ENCODE measurements at regions of chr15 and their contacts with region 1.

Region 1: GRCh38 chr15:75453703-75454470 is 2.4 kb upstream of the SIN3A start:
- DNase-seq: peak; percentile 84 to 99 (median 97)
- ATAC-seq: peak; percentile 41 to 48 (median 45)
- H3K4me3 ChIP-seq: peak overlapping the region; percentile 78 to 93
- H3K4me3 Mint-ChIP-seq: peak overlapping the region; percentile 94 to 100 (median 95)
- H3K27ac ChIP-seq: peak overlapping the region; percentile 88
- H3K27ac Mint-ChIP-seq: peak overlapping the region; percentile 98 to 99
- H3K4me1 ChIP-seq: peaks cover 22 to 41% of the 10 kb centered on the region in 2 experiments
- H3K4me1 Mint-ChIP-seq: peaks cover 38 to 46% (median 40%) of the 10 kb centered on the region in 3 donors
- H3K27me3 ChIP-seq: no peaks in the 10 kb centered on the region
- H3K27me3 Mint-ChIP-seq: no peaks in the 10 kb centered on the region

Region 2: DNA sequence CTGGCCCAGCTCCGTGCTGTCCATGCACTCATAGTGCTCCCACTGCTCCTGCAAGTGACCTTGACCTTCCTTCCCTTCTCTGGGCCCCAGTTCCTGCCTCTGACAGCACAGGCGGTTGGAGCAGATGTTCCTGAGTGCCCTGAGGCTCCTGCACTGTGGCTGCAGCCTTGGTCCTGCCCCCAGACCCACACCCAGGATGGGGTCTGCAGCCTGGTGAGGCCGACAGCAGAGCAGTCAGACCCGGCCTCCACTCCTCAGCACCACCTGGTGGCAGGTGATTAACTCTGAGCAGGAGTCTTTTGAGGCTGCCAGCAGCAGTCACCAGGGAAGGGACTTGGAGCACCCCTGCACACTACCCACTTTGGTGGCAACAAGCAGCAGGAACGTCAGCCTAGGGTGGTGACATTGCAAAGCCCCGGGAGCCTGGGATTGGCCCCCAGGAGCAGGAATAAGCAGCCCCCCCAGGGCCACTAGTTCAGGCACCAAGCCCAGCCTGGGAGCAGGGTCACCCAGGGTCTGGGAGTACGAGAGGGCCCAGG is 1151.0 kb before region 1 on chr15:
- CTCF ChIA-PET with region 1: no interaction called
- POLR2A ChIA-PET with region 1: no interaction called
- DNase-seq: peak in 14 of 35 experiments; percentile 11 to 45 (median 28)
- ATAC-seq: no peak
- H3K4me3 ChIP-seq: no peak overlapping the region
- H3K4me3 Mint-ChIP-seq: no peak overlapping the region
- H3K27ac ChIP-seq: no peak overlapping the region
- H3K27ac Mint-ChIP-seq: no peak overlapping the region
- H3K4me1 ChIP-seq: no peaks in the 10 kb centered on the region
- H3K4me1 Mint-ChIP-seq: no peaks in the 10 kb centered on the region
- H3K27me3 ChIP-seq: peaks cover 3 to 73% of the 10 kb centered on the region in 2 experiments
- H3K27me3 Mint-ChIP-seq: peaks cover 49 to 67% of the 10 kb centered on the region in 2 donors

Region 3: GRCh38 chr15:74408815-74409214 is 1045.1 kb before region 1 on chr15:
- CTCF ChIA-PET with region 1: no interaction called
- POLR2A ChIA-PET with region 1: no interaction called
- DNase-seq: no peak
- ATAC-seq: no peak
- H3K4me3 ChIP-seq: no peak overlapping the region
- H3K4me3 Mint-ChIP-seq: no peak overlapping the region
- H3K27ac ChIP-seq: no peak overlapping the region
- H3K27ac Mint-ChIP-seq: no peak overlapping the region
- H3K4me1 ChIP-seq: peaks cover 0 to 4% of the 10 kb centered on the region in 2 experiments
- H3K4me1 Mint-ChIP-seq: peaks cover 4 to 13% (median 5%) of the 10 kb centered on the region in 3 donors
- H3K27me3 ChIP-seq: peaks cover 0 to 3% of the 10 kb centered on the region in 2 experiments
- H3K27me3 Mint-ChIP-seq: no peaks in the 10 kb centered on the region

Region 4: DNA sequence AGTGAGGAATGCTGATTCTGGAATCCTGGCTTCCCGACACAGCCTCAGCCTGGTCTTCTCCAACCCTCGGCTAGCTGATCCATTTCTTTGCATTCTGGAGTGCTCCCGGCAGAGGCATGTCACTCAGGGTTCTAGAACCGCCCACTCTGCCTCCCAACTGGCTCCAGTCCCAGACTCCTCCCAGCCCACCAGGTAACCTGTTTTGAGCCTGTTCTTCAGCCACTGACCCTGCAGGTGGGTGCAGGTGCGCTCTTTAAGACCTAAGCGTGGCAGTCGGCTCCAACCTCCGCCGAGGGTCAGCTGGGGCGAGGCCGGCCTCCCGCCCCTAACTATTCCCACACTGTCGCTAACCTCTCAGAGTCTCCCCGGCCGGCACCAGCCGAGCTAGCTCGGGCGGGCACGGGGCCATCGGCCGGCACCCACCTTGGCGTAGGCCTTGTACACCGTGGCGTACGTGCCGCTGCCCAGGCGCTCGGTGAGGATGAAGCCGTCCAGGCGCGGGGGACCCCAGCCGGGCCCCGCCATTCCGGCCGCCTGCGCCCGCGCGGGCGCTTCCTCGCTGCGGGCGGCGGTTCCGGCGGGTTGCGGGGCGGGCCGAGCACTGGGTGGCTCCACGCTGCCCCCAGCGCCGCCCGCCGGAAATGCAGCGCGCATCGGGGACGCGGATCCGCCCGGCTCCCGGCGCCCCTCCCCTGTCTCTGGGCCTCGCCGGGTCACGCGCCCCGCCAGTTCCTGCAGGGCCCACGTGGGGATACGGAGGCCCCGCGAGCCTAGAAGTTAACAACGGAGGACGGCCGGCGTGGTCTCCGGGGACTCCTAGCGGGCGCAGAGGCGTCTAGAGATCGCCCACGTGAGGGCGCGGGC is 611.1 kb before region 1 on chr15 and contains the start of gene ULK3:
- CTCF ChIA-PET with region 1: no interaction called
- POLR2A ChIA-PET with region 1: interaction called in 1 of 2 experiments, 13 read pairs
- DNase-seq: peak; percentile 82 to 95 (median 90)
- ATAC-seq: peak; percentile 84 to 90 (median 88)
- H3K4me3 ChIP-seq: peak within 1 kb of the TSS; percentile 84 to 96
- H3K4me3 Mint-ChIP-seq: peak within 1 kb of the TSS; percentile 86 to 90 (median 86)
- H3K27ac ChIP-seq: peak within 1 kb of the TSS; percentile 71
- H3K27ac Mint-ChIP-seq: peak within 1 kb of the TSS; percentile 96 to 97
- H3K4me1 ChIP-seq: peaks cover 28 to 66% of the 10 kb centered on the region in 2 experiments
- H3K4me1 Mint-ChIP-seq: peaks cover 48 to 64% (median 54%) of the 10 kb centered on the region in 3 donors
- H3K27me3 ChIP-seq: no peaks in the 10 kb centered on the region
- H3K27me3 Mint-ChIP-seq: no peaks in the 10 kb centered on the region
- total RNA-seq, gene ULK3: 53.4 to 112 (median 101) TPM

Region 5: GRCh38 chr15:75354454-75354853 is 99.4 kb before region 1 on chr15:
- CTCF ChIA-PET with region 1: no interaction called
- POLR2A ChIA-PET with region 1: no interaction called
- DNase-seq: no peak
- ATAC-seq: no peak
- H3K4me3 ChIP-seq: no peak overlapping the region
- H3K4me3 Mint-ChIP-seq: no peak overlapping the region
- H3K27ac ChIP-seq: no peak overlapping the region
- H3K27ac Mint-ChIP-seq: no peak overlapping the region
- H3K4me1 ChIP-seq: peaks cover 0 to 16% of the 10 kb centered on the region in 2 experiments
- H3K4me1 Mint-ChIP-seq: peaks cover 14 to 17% (median 15%) of the 10 kb centered on the region in 3 donors
- H3K27me3 ChIP-seq: no peaks in the 10 kb centered on the region
- H3K27me3 Mint-ChIP-seq: no peaks in the 10 kb centered on the region

Region 6: DNA sequence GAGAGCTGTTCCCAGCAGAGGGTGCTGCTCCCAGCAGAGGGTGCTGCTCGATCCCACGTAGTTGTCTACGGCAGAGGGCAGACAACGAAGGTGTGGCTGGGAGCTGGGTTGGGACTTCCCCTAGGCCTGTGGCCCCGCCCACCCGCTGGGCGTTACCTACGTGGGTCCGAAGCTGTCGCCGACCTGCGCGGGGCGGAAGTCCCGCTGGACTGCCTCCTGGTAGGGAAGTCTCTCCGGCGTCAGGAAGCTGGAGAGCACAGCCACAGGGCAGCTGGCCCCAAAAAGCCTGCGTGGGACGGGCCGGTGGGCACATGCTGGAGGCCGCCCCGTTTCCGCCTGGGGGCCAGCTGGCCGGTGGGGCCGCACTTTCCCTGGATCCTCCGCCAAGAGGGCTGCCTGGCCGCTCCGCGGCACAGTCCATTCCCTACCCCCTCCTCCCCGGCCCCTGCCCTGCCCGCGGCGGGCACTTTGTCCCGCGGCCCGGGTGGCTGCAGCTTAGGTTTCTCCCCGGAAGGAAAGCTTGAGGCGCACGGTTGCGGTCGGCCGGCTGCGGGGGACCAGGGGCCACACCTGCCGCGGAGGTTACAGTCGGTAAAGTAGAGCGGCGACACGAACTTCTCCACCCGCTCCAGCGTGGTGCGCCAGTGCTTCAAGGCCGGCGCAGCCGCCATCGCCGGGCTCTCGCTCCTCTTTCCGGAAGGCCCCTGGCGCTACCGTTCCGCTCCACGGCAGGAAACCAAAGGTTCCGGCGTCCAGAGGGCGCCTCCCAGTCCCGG is 85.8 kb before region 1 on chr15 and contains the start of gene MAN2C1:
- CTCF ChIA-PET with region 1: interaction called, 4 to 17 read pairs
- POLR2A ChIA-PET with region 1: interaction called, 4 to 8 read pairs
- DNase-seq: peak; percentile 73 to 96 (median 84)
- ATAC-seq: peak; percentile 92 to 94 (median 92)
- H3K4me3 ChIP-seq: peak within 1 kb of the TSS; percentile 91 to 93
- H3K4me3 Mint-ChIP-seq: peak within 1 kb of the TSS; percentile 89 to 91 (median 90)
- H3K27ac ChIP-seq: peak within 1 kb of the TSS; percentile 92
- H3K27ac Mint-ChIP-seq: peak within 1 kb of the TSS; percentile 95
- H3K4me1 ChIP-seq: peaks cover 3 to 18% of the 10 kb centered on the region in 2 experiments
- H3K4me1 Mint-ChIP-seq: peaks cover 16 to 27% (median 26%) of the 10 kb centered on the region in 3 donors
- H3K27me3 ChIP-seq: no peaks in the 10 kb centered on the region
- H3K27me3 Mint-ChIP-seq: no peaks in the 10 kb centered on the region
- total RNA-seq, gene MAN2C1: 357 to 529 (median 447) TPM

Measured in T-cell (primary cell).